Adrenal gland (tissue), 19 donors: ENCODE measurements at regions of chr18 and their contacts with region 1.

Region 1: GRCh38 chr18:21298351-21298750 is 56.3 kb downstream of the GREB1L start:
- DNase-seq: no peak
- H3K4me3 ChIP-seq: no peak overlapping the region
- H3K27ac ChIP-seq: no peak overlapping the region
- H3K4me1 ChIP-seq: no peaks in the 10 kb centered on the region
- H3K27me3 ChIP-seq: no peaks in the 10 kb centered on the region
- CTCF ChIP-seq: no peak
- POLR2A ChIP-seq: no peak

Region 2: DNA sequence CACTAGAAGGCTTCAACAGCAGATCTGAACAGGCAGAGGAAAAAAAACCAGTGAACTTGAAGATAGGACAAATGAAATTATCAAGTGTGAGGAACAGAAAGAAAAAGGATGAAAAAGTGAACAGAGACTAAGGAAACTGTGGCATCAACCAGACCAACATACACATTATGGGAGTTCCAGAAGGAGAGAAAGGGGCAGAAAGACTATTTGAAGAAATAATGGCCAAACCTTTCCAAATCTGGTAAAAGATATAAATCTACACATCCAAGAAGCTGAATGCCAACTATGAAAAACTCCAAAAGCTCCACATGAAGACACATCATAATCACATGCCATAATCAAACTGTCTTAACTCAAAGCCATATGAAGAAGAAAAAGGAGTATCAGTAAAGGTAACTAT is 266.5 kb before region 1 on chr18:
- intact Hi-C with region 1: no loop called
- DNase-seq: no peak
- H3K4me3 ChIP-seq: no peak overlapping the region
- H3K27ac ChIP-seq: no peak overlapping the region
- H3K4me1 ChIP-seq: no peaks in the 10 kb centered on the region
- H3K27me3 ChIP-seq: no peaks in the 10 kb centered on the region
- CTCF ChIP-seq: no peak
- POLR2A ChIP-seq: no peak

Region 3: DNA sequence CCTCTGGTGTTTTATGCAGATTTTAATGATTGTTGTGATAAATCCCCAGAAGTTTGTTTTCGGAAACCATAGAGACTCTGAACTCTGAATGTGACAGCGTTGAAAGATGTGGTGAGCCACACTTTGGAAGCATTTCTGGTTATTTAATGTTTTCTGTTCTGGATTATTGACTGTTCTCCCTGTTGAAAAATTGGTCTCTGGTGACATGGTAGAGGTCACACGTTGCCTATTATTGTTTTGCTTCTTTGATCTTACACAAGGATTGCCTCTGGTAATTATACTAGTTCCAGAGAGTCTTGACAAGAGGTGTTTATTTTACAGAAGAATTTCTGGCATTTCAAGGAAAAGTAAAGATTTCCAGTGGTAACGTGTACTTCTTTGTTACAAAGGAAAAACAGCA is 70.8 kb after region 1 on chr18:
- intact Hi-C with region 1: loop called in 1 of 2 experiments (anchors 10 kb)
- DNase-seq: no peak
- H3K4me3 ChIP-seq: no peak overlapping the region
- H3K27ac ChIP-seq: no peak overlapping the region
- H3K4me1 ChIP-seq: peaks cover 0 to 4% of the 10 kb centered on the region in 2 donors
- H3K27me3 ChIP-seq: no peaks in the 10 kb centered on the region
- CTCF ChIP-seq: no peak
- POLR2A ChIP-seq: no peak

Region 4: GRCh38 chr18:21727702-21728101 is 429.4 kb after region 1 on chr18:
- intact Hi-C with region 1: no loop called
- DNase-seq: no peak
- H3K4me3 ChIP-seq: no peak overlapping the region
- H3K27ac ChIP-seq: no peak overlapping the region
- H3K4me1 ChIP-seq: no peaks in the 10 kb centered on the region
- H3K27me3 ChIP-seq: no peaks in the 10 kb centered on the region
- CTCF ChIP-seq: no peak
- POLR2A ChIP-seq: no peak